Naive thymus-derived CD4-positive, alpha-beta T cell (primary cell): ENCODE measurements at regions of chr18 and their contacts with region 1.

Region 1: DNA sequence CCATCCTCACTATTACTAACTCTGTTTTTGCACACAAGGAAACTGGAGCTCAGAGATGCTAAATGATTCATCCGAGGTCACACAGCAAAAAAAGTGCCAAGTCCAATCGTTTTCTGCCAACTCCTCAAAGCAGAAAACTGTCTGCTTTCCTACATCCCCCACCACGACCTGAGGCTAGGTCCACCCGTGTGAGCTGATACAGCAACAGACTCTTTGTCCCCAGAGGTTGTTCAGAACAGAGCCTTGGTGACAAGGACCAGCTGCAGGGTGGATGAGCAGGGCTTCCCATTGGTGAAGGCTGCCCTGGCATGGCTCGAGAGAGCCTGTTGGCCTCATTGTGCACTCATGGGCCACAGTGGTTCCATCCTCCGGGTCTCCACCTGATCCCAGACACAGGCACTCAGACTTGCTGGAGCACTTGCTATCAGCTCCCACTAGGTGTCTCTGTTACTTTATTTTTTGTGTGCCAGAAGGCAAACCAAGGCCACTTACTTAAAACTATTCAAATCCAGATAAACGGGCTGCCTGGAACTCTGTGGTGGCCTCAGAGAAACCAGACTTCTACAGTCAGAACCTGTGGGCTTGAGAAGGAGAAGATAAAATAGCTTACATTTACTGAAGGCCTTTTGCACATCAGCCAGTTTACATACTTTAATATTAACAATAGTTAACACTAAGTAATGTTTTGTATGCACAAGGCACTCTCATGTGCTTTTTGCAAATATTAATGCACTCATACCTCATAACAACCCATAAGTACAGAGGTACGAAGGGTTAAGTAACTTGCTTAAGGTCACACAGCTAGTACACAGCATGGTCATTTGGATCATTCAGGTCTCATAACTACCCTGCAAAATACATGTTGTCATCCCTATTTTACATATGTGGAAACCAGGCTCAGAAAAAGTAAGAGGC is 62.9 kb upstream of the CTIF start:
- DNase-seq: peak in 6 of 9 donors; percentile 19 to 40 (median 29)
- ATAC-seq: peak; percentile 58
- H3K4me3 ChIP-seq: no peak overlapping the region
- H3K4me3 Mint-ChIP-seq: no peak overlapping the region
- H3K27ac ChIP-seq: no peak overlapping the region
- H3K27ac Mint-ChIP-seq: no peak overlapping the region
- H3K4me1 ChIP-seq: no peaks in the 10 kb centered on the region
- H3K4me1 Mint-ChIP-seq: no peaks in the 10 kb centered on the region
- H3K27me3 ChIP-seq: peaks cover 0 to 3% of the 10 kb centered on the region in 2 donors
- H3K27me3 Mint-ChIP-seq: peaks cover 14 to 54% (median 34%) of the 10 kb centered on the region in 5 donors

Region 2: DNA sequence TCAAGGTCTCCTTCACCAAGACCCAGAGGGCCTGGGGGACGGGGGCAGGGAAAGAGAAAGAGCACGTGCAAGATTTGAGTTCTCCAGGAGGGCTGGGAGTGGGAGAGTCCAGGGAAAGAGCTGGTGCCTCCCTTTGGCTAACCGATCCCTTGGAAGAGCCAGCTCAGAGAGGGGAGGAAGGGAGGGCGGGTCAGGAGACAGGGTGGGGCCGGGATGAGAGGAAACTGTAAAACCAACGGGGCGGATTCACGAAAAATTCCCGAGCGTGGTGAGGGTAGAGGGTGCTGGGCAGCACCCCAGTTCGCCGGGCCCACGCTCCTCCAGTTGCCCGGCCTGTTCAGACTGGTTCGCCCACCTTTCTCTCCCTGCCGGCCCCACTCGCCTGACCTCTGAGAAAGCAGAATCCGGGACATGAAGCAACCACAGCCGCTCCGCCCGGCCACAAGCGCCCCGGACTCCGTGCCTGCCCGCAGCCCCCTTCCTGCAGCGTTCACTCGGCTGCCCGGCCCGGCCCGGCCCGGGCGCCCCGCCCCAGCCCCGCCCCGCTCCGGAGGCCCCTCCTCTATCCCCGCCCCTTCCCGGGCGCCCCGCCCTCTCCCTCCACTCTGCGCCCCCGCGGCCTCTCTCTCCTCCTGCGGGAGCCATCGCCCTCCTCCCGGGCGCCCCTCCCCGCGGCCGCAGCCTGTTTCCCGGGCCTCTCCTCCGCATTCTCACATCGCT is 314.5 kb before region 1 on chr18:
- CTCF ChIA-PET with region 1: no interaction called
- POLR2A ChIA-PET with region 1: no interaction called
- intact Hi-C with region 1: no loop called
- DNase-seq: peak; percentile 5 to 82 (median 34)
- ATAC-seq: peak; percentile 94
- H3K4me3 ChIP-seq: peak overlapping the region; percentile 9
- H3K4me3 Mint-ChIP-seq: peak overlapping the region; percentile 32 to 75 (median 70)
- H3K27ac ChIP-seq: no peak overlapping the region
- H3K27ac Mint-ChIP-seq: peak overlapping the region in 1 of 9 donors; percentile 49
- H3K4me1 ChIP-seq: no peaks in the 10 kb centered on the region
- H3K4me1 Mint-ChIP-seq: peaks cover 2 to 15% (median 10%) of the 10 kb centered on the region in 7 donors
- H3K27me3 ChIP-seq: no peaks in the 10 kb centered on the region
- H3K27me3 Mint-ChIP-seq: peaks cover 0 to 60% (median 16%) of the 10 kb centered on the region in 5 donors

Region 3: DNA sequence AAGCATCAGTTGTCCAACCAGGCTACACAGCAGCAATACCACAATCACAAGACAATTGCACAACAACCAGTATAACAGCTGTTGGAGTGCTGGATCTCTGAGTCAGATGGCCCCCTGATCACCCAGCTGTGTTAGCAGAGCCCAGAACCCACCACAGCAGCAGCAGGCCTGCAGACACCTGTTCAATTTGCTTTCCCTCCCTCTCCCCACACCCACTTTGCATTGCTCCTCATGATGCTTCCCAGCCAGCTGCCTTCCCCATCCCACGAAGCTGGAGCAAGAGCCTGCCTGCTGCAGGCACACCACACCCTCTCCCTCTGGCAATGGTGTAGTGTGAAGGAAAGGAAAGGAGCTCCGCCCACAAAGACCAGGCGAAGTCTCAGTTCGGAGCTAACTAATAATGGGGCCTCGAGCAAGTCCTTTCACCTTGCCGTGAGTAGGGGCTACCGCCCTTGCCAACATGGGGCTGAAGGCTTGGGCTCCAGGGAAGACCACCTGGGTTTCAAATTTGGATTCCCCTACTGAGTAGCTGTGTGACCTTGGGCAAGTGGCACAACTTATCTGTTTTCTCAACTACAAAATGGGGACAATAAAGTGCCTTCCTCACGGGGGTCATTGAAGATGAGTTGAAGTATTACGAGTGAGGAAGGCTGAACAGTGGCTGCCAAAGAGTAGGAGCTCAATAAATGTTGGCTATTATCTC is 47.3 kb before region 1 on chr18:
- CTCF ChIA-PET with region 1: no interaction called
- POLR2A ChIA-PET with region 1: no interaction called
- intact Hi-C with region 1: no loop called
- DNase-seq: no peak
- ATAC-seq: no peak
- H3K4me3 ChIP-seq: no peak overlapping the region
- H3K4me3 Mint-ChIP-seq: no peak overlapping the region
- H3K27ac ChIP-seq: no peak overlapping the region
- H3K27ac Mint-ChIP-seq: no peak overlapping the region
- H3K4me1 ChIP-seq: no peaks in the 10 kb centered on the region
- H3K4me1 Mint-ChIP-seq: no peaks in the 10 kb centered on the region
- H3K27me3 ChIP-seq: no peaks in the 10 kb centered on the region
- H3K27me3 Mint-ChIP-seq: peaks cover 42 to 69% (median 55%) of the 10 kb centered on the region in 5 donors

Region 4: GRCh38 chr18:48663931-48664847 is 188.3 kb after region 1 on chr18:
- CTCF ChIA-PET with region 1: interaction called, 5 read pairs
- POLR2A ChIA-PET with region 1: no interaction called
- intact Hi-C with region 1: loop called in 1 of 2 experiments (anchors 1 kb)
- DNase-seq: peak in 6 of 9 donors; percentile 8 to 63 (median 35)
- ATAC-seq: peak; percentile 63
- H3K4me3 ChIP-seq: no peak overlapping the region
- H3K4me3 Mint-ChIP-seq: no peak overlapping the region
- H3K27ac ChIP-seq: no peak overlapping the region
- H3K27ac Mint-ChIP-seq: peak overlapping the region in 1 of 9 donors; percentile 78
- H3K4me1 ChIP-seq: no peaks in the 10 kb centered on the region
- H3K4me1 Mint-ChIP-seq: peaks cover 0 to 7% (median 0%) of the 10 kb centered on the region in 7 donors
- H3K27me3 ChIP-seq: no peaks in the 10 kb centered on the region
- H3K27me3 Mint-ChIP-seq: peaks cover 0 to 17% (median 11%) of the 10 kb centered on the region in 5 donors